CD4-positive, alpha-beta memory T cell (primary cell): ENCODE measurements at regions of chr1 and their contacts with region 1.

Region 1: GRCh38 chr1:21659099-21659923 is 9.8 kb downstream of the RAP1GAP start:
- DNase-seq: peak; percentile 81 to 86 (median 83)
- H3K4me3 ChIP-seq: no peak overlapping the region
- H3K4me3 Mint-ChIP-seq: peak overlapping the region in 4 of 8 donors; percentile 31 to 65 (median 40)
- H3K27ac ChIP-seq: no peak overlapping the region
- H3K27ac Mint-ChIP-seq: peak overlapping the region in 2 of 7 donors; percentile 7 to 57
- H3K4me1 ChIP-seq: peaks cover 8% of the 10 kb centered on the region
- H3K4me1 Mint-ChIP-seq: peaks cover 0 to 7% (median 5%) of the 10 kb centered on the region in 4 donors
- H3K27me3 ChIP-seq: no peaks in the 10 kb centered on the region
- H3K27me3 Mint-ChIP-seq: peaks cover 9 to 15% of the 10 kb centered on the region in 2 donors

Region 2: GRCh38 chr1:21216835-21217811 is 442.2 kb before region 1 on chr1:
- CTCF ChIA-PET with region 1: no interaction called
- POLR2A ChIA-PET with region 1: no interaction called
- intact Hi-C with region 1: loop called (anchors 2 kb)
- DNase-seq: peak; percentile 56 to 70 (median 61)
- H3K4me3 ChIP-seq: no peak overlapping the region
- H3K4me3 Mint-ChIP-seq: no peak overlapping the region
- H3K27ac ChIP-seq: no peak overlapping the region
- H3K27ac Mint-ChIP-seq: peak overlapping the region in 6 of 7 donors; percentile 27 to 80 (median 68)
- H3K4me1 ChIP-seq: no peaks in the 10 kb centered on the region
- H3K4me1 Mint-ChIP-seq: peaks cover 2 to 9% (median 4%) of the 10 kb centered on the region in 4 donors
- H3K27me3 ChIP-seq: no peaks in the 10 kb centered on the region
- H3K27me3 Mint-ChIP-seq: no peaks in the 10 kb centered on the region

Region 3: DNA sequence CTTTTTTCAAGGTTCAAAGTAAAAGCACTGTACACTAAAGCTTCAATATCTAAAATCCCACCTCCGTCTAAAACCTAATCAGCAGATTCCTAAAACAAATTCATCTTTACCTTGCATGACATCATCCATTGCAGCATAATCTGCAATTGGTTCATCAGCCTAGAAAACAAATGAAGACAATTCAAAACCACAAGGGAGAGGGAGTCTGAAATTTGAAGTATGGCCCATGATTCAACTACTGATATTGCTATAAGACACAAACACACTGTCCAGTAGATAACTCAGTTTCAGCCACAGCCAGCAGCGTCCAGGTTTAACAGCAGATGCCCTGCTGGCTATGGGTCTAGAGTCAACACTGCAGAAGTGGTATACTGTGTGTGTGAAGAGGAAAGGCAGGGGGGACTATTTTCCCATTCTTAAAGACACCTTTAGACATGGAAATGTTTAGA is 27.8 kb after region 1 on chr1:
- CTCF ChIA-PET with region 1: no interaction called
- POLR2A ChIA-PET with region 1: no interaction called
- intact Hi-C with region 1: no loop called
- DNase-seq: no peak
- H3K4me3 ChIP-seq: no peak overlapping the region
- H3K4me3 Mint-ChIP-seq: no peak overlapping the region
- H3K27ac ChIP-seq: no peak overlapping the region
- H3K27ac Mint-ChIP-seq: peak overlapping the region in 2 of 7 donors; percentile 5 to 85
- H3K4me1 ChIP-seq: no peaks in the 10 kb centered on the region
- H3K4me1 Mint-ChIP-seq: no peaks in the 10 kb centered on the region
- H3K27me3 ChIP-seq: no peaks in the 10 kb centered on the region
- H3K27me3 Mint-ChIP-seq: no peaks in the 10 kb centered on the region

Region 4: GRCh38 chr1:21742578-21742977 is 83.3 kb after region 1 on chr1:
- CTCF ChIA-PET with region 1: no interaction called
- POLR2A ChIA-PET with region 1: no interaction called
- intact Hi-C with region 1: no loop called
- DNase-seq: no peak
- H3K4me3 ChIP-seq: no peak overlapping the region
- H3K4me3 Mint-ChIP-seq: no peak overlapping the region
- H3K27ac ChIP-seq: no peak overlapping the region
- H3K27ac Mint-ChIP-seq: peak overlapping the region in 1 of 7 donors; percentile 60
- H3K4me1 ChIP-seq: no peaks in the 10 kb centered on the region
- H3K4me1 Mint-ChIP-seq: peaks cover 0 to 10% (median 6%) of the 10 kb centered on the region in 4 donors
- H3K27me3 ChIP-seq: no peaks in the 10 kb centered on the region
- H3K27me3 Mint-ChIP-seq: no peaks in the 10 kb centered on the region

Region 5: GRCh38 chr1:21782868-21783678 is 123.8 kb after region 1 on chr1 and contains the start of gene USP48:
- CTCF ChIA-PET with region 1: interaction called, 3 read pairs
- POLR2A ChIA-PET with region 1: no interaction called
- intact Hi-C with region 1: loop called (anchors 5 kb)
- DNase-seq: peak; percentile 97 to 98 (median 97)
- H3K4me3 ChIP-seq: peak within 1 kb of the TSS; percentile 47 to 97
- H3K4me3 Mint-ChIP-seq: peak within 1 kb of the TSS; percentile 92 to 99 (median 97)
- H3K27ac ChIP-seq: peak within 1 kb of the TSS; percentile 99
- H3K27ac Mint-ChIP-seq: peak within 1 kb of the TSS; percentile 100
- H3K4me1 ChIP-seq: peaks cover 37% of the 10 kb centered on the region
- H3K4me1 Mint-ChIP-seq: peaks cover 22 to 44% (median 33%) of the 10 kb centered on the region in 4 donors
- H3K27me3 ChIP-seq: no peaks in the 10 kb centered on the region
- H3K27me3 Mint-ChIP-seq: peaks cover 0 to 3% of the 10 kb centered on the region in 2 donors
- total RNA-seq, gene USP48: 110 to 117 TPM

Region 6: GRCh38 chr1:21963477-21964217 is 304.3 kb after region 1 on chr1:
- CTCF ChIA-PET with region 1: no interaction called
- POLR2A ChIA-PET with region 1: no interaction called
- intact Hi-C with region 1: loop called (anchors 2 kb)
- DNase-seq: peak; percentile 70 to 82 (median 77)
- H3K4me3 ChIP-seq: no peak overlapping the region
- H3K4me3 Mint-ChIP-seq: peak overlapping the region in 1 of 8 donors; percentile 1
- H3K27ac ChIP-seq: no peak overlapping the region
- H3K27ac Mint-ChIP-seq: peak overlapping the region; percentile 4 to 90 (median 63)
- H3K4me1 ChIP-seq: peaks cover 3% of the 10 kb centered on the region
- H3K4me1 Mint-ChIP-seq: peaks cover 6 to 12% (median 6%) of the 10 kb centered on the region in 4 donors
- H3K27me3 ChIP-seq: no peaks in the 10 kb centered on the region
- H3K27me3 Mint-ChIP-seq: peaks cover 0 to 2% of the 10 kb centered on the region in 2 donors